Body of pancreas (tissue), 4 donors: ENCODE measurements at regions of chr1 and their contacts with region 1.

Region 1: DNA sequence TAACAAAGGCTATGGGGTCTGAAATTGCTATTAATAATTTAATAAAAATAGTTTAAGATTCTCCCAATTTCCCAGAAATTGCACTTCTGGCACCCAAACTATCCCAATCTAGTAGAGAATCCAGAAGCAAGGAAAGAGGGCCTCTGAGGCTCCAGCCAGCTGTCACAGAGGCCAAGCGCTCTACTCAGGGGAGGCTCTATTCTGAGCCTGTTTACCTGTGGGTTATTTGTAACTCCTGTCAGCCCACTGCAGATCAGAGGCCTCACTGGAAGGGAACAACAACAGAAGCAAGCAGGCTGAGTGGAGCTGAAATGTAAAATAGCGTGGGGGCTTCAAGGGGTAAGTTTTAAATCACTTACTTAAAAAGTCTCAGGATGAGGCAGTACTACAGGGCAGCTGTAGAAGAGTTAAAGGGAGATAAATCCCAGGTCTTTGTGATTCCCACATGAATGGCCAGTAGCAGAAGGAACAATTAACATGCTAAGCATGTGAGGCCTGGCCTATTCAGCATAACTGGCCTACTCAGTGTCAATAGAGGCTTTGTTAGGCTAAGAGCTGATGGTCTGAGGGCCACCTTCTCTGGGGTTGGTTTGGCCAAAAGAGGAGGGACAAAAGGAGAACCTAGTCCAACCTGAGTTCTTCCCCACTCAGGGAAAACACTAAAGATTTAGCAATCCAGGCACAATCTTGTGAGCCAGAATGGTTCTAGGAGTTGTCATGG is 12.8 kb downstream of the ZNF687 start:
- DNase-seq: no peak
- ATAC-seq: no peak
- H3K4me3 ChIP-seq: no peak overlapping the region
- H3K27ac ChIP-seq: no peak overlapping the region
- H3K4me1 ChIP-seq: no peaks in the 10 kb centered on the region
- H3K27me3 ChIP-seq: no peaks in the 10 kb centered on the region
- CTCF ChIP-seq: no peak
- POLR2A ChIP-seq: no peak

Region 2: GRCh38 chr1:151340870-151341754 is 46.2 kb after region 1 on chr1:
- intact Hi-C with region 1: loop called (anchors 5 kb)
- DNase-seq: peak; percentile 44 to 70 (median 53)
- ATAC-seq: peak; percentile 90
- H3K4me3 ChIP-seq: no peak overlapping the region
- H3K27ac ChIP-seq: peak overlapping the region in 2 of 4 donors; percentile 30 to 37
- H3K4me1 ChIP-seq: peaks cover 3% of the 10 kb centered on the region
- H3K27me3 ChIP-seq: no peaks in the 10 kb centered on the region
- CTCF ChIP-seq: peak; percentile 29 to 84 (median 80)
- POLR2A ChIP-seq: no peak

Region 3: GRCh38 chr1:151372061-151372934 is 77.4 kb after region 1 on chr1 and contains the start of gene SELENBP1:
- intact Hi-C with region 1: no loop called
- DNase-seq: peak; percentile 94 to 98 (median 96)
- ATAC-seq: peak; percentile 94
- H3K4me3 ChIP-seq: no peak within 1 kb of the TSS
- H3K27ac ChIP-seq: peak within 1 kb of the TSS; percentile 78 to 88 (median 87)
- H3K4me1 ChIP-seq: peaks cover 40% of the 10 kb centered on the region
- H3K27me3 ChIP-seq: no peaks in the 10 kb centered on the region
- CTCF ChIP-seq: no peak
- POLR2A ChIP-seq: peak; percentile 88 to 97 (median 97)
- total RNA-seq, gene SELENBP1: 52.1 to 106 TPM

Region 4: DNA sequence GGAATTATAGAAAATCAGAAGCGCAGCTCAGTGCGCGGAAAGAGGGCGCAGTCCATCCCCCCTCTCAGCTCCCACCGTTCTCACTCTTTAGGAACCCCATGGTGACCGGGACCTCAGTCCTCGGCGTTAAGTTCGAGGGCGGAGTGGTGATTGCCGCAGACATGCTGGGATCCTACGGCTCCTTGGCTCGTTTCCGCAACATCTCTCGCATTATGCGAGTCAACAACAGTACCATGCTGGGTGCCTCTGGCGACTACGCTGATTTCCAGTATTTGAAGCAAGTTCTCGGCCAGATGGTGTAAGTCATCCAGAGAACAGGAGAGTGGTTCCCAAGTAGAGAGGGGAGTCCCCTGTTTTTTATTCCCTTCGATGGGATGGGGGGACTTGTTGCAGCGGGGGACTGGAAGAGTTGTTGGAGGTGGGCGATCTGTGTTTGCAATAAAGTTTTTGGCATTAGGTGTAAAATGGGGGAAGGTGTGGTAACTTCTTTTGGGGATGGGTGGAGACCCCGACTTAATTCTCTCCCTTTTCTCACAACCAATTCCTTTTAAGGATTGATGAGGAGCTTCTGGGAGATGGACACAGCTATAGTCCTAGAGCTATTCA is 105.1 kb after region 1 on chr1:
- intact Hi-C with region 1: loop called (anchors 5 kb)
- DNase-seq: peak in 3 of 4 donors; percentile 9 to 26 (median 18)
- ATAC-seq: peak; percentile 5
- H3K4me3 ChIP-seq: peak overlapping the region; percentile 54 to 69
- H3K27ac ChIP-seq: peak overlapping the region; percentile 66 to 85 (median 80)
- H3K4me1 ChIP-seq: peaks cover 18% of the 10 kb centered on the region
- H3K27me3 ChIP-seq: no peaks in the 10 kb centered on the region
- CTCF ChIP-seq: no peak
- POLR2A ChIP-seq: no peak